Aorta (tissue), 5 donors: ENCODE measurements at regions of chr2 and their contacts with region 1.

Region 1: GRCh38 chr2:162123806-162124758 is 28.0 kb downstream of the GCG start:
- DNase-seq: no peak
- ATAC-seq: peak; percentile 72
- H3K4me3 ChIP-seq: no peak overlapping the region
- H3K27ac ChIP-seq: no peak overlapping the region
- H3K4me1 ChIP-seq: no peaks in the 10 kb centered on the region
- H3K27me3 ChIP-seq: no peaks in the 10 kb centered on the region

Region 2: GRCh38 chr2:161586517-161587167 is 537.4 kb before region 1 on chr2:
- intact Hi-C with region 1: loop called in 1 of 2 experiments (anchors 10 kb)
- DNase-seq: no peak
- ATAC-seq: no peak
- H3K4me3 ChIP-seq: no peak overlapping the region
- H3K27ac ChIP-seq: no peak overlapping the region
- H3K4me1 ChIP-seq: no peaks in the 10 kb centered on the region
- H3K27me3 ChIP-seq: no peaks in the 10 kb centered on the region

Region 3: DNA sequence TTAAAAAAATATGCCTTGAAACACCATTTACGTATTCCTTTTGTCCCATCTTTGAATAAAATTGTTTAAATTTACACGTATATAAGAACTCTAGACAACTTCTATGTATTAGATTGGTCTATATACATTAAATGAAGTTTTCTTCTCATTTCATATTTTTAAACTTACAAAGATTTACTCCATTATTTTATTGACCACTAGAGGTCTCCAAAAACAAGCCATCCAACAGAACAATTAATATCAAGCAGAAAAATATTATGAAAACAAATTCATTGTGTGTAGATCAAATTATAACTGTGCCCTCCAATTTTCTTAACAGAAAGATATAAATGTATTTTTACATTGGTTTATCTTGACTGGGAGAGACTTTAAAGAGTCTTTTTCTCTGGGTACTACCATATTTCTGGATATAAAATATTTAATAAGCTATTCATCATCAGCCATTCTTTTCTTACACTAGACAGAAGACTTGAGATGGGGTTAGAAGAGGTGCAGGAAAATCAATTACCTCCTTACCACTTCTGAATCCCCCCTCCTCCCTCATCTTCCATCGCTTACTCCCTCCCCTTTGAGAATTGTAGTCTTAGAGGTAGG is 116.5 kb before region 1 on chr2:
- intact Hi-C with region 1: loop called (anchors 2 to 5 kb)
- DNase-seq: no peak
- ATAC-seq: no peak
- H3K4me3 ChIP-seq: no peak overlapping the region
- H3K27ac ChIP-seq: no peak overlapping the region
- H3K4me1 ChIP-seq: no peaks in the 10 kb centered on the region
- H3K27me3 ChIP-seq: no peaks in the 10 kb centered on the region

Region 4: GRCh38 chr2:162233197-162233596 is 109.1 kb after region 1 on chr2:
- intact Hi-C with region 1: no loop called
- DNase-seq: no peak
- ATAC-seq: no peak
- H3K4me3 ChIP-seq: no peak overlapping the region
- H3K27ac ChIP-seq: no peak overlapping the region
- H3K4me1 ChIP-seq: peaks cover 0 to 2% of the 10 kb centered on the region in 2 donors
- H3K27me3 ChIP-seq: no peaks in the 10 kb centered on the region